Naive thymus-derived CD4-positive, alpha-beta T cell (primary cell): ENCODE measurements at regions of chr12 and their contacts with region 1.

Region 1: DNA sequence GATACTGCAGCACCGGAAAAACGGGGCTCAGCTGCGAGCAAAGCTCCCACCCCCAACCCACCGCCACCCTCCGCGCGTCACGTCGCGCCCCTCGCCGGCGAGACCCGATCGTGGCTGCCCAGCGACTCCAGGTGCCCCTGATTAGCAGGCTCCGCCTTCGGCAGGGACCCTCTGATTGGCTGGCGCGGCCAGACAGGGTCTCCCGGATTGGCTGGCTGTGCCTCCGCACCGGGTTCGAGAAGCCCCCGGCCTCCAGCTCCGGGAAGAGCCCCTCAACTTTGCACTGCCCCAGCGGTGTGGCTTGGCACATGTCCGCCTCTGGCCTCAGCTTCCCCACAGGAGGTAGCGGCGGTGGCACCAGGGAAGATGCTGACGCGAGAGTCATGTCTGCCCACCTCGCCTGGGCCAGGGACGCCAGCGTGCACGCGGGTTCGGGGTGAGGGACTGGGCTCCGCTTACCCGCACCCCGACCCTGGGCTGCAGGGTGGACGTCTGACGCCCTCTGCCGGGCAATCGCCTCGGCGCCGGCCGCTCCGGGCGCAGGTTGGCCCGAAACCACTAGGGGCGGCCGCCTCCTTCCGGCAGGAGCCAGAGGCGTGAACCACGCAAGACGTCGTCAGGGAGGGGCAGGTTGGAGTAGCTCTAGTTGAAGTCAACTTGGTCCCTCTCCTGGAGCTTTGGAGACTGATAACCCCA is 498 bp upstream of the RHOF start:
- DNase-seq: peak; percentile 91 to 98 (median 95)
- ATAC-seq: peak; percentile 77
- H3K4me3 ChIP-seq: peak overlapping the region; percentile 99
- H3K4me3 Mint-ChIP-seq: peak overlapping the region; percentile 84 to 99 (median 93)
- H3K27ac ChIP-seq: peak overlapping the region; percentile 96
- H3K27ac Mint-ChIP-seq: peak overlapping the region; percentile 85 to 99 (median 95)
- H3K4me1 ChIP-seq: peaks cover 44 to 50% of the 10 kb centered on the region in 2 donors
- H3K4me1 Mint-ChIP-seq: peaks cover 44 to 72% (median 59%) of the 10 kb centered on the region in 7 donors
- H3K27me3 ChIP-seq: no peaks in the 10 kb centered on the region
- H3K27me3 Mint-ChIP-seq: no peaks in the 10 kb centered on the region

Region 2: DNA sequence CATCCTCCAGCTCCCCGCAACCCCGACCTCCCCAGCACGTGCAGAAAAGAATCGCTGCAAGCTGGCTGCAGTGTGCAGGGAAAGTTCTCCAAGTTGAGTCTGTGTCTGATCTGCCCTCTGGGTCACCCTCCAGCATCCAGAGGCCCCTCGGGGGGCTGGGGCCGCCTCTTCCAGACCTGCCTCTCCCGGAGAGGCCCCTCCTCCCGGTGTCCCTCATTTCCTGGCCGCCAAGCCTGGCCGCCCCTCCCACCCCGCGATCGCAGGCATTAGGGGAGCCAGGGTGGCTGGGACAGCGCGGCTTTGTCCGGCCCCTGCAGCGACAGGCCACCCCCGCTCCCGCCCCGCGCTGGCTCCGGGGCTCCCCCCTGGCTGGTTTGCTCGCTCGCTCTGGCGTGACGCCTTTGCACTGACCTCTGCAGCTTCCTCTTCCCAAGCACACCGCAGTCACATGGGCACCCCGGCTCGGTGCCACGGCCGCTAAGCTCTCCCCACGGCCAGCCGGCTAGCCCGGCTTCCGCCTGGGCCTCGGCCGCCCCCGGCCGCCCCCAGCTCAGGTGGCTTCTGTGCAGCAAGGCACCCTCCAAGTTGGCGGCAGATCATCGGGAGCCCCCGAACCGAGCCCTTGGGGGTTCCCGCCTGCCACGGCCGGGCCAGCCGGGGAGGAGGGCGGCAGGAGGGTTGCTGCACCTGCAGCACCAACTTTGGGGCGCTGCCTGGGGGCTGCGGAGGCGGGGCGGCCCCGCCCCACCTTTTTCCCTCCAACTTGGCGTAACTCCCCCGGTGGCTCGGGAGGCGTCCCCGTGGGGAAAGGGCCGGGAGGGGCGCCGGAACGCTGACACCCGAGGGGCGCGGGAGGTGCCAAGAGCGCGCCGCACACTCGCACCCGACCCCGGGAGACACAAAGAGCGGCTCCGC is 256.8 kb before region 1 on chr12:
- CTCF ChIA-PET with region 1: no interaction called
- POLR2A ChIA-PET with region 1: interaction called, 4 read pairs
- intact Hi-C with region 1: loop called in 1 of 2 experiments (anchors 5 kb)
- DNase-seq: peak in 8 of 9 donors; percentile 20 to 70 (median 28)
- ATAC-seq: peak; percentile 51
- H3K4me3 ChIP-seq: peak overlapping the region; percentile 62
- H3K4me3 Mint-ChIP-seq: peak overlapping the region; percentile 51 to 91 (median 81)
- H3K27ac ChIP-seq: peak overlapping the region; percentile 74
- H3K27ac Mint-ChIP-seq: peak overlapping the region; percentile 43 to 97 (median 92)
- H3K4me1 ChIP-seq: peaks cover 29 to 36% of the 10 kb centered on the region in 2 donors
- H3K4me1 Mint-ChIP-seq: peaks cover 21 to 56% (median 44%) of the 10 kb centered on the region in 7 donors
- H3K27me3 ChIP-seq: no peaks in the 10 kb centered on the region
- H3K27me3 Mint-ChIP-seq: peaks cover 0 to 4% (median 0%) of the 10 kb centered on the region in 5 donors

Region 3: DNA sequence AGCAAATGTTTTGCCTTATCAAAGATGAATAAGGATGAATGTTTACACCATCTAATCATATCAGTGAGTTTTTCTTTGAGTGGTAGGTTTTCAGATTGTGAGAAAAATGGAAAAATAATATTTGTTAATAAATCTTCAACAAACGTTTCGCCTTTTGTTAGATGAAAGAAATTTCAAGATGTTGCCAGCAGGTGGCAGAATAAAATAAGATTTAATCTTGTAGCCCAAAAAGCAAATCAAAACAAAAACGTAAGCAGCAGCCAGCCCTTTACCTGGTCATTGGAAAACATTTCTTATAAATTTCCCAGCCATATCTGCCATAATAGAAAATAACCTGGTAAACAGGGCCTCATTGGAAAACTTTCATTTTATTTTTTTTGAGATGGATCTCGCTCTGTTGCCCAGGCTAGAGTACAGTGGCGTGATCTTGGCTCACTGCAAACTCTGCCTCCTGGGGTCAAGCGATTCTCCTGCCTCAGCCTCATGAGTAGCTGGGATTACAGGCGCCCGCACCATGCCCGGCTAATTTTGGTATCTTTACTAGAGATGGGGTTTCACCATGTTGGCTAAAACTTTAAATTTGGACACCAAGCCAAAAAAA is 96.8 kb before region 1 on chr12:
- CTCF ChIA-PET with region 1: interaction called, 57 read pairs
- POLR2A ChIA-PET with region 1: interaction called, 5 read pairs
- intact Hi-C with region 1: loop called (anchors 1 kb)
- DNase-seq: peak in 7 of 9 donors; percentile 37 to 72 (median 63)
- ATAC-seq: no peak
- H3K4me3 ChIP-seq: no peak overlapping the region
- H3K4me3 Mint-ChIP-seq: no peak overlapping the region
- H3K27ac ChIP-seq: no peak overlapping the region
- H3K27ac Mint-ChIP-seq: peak overlapping the region in 4 of 9 donors; percentile 5 to 41 (median 28)
- H3K4me1 ChIP-seq: no peaks in the 10 kb centered on the region
- H3K4me1 Mint-ChIP-seq: peaks cover 0 to 5% (median 0%) of the 10 kb centered on the region in 7 donors
- H3K27me3 ChIP-seq: no peaks in the 10 kb centered on the region
- H3K27me3 Mint-ChIP-seq: peaks cover 0 to 7% (median 0%) of the 10 kb centered on the region in 5 donors

Region 4: GRCh38 chr12:121773011-121773777 is 20.8 kb before region 1 on chr12:
- CTCF ChIA-PET with region 1: interaction called, 325 read pairs
- POLR2A ChIA-PET with region 1: interaction called, 1,941 read pairs
- intact Hi-C with region 1: loop called (anchors 1 kb)
- DNase-seq: peak; percentile 64 to 79 (median 75)
- ATAC-seq: peak; percentile 91
- H3K4me3 ChIP-seq: no peak overlapping the region
- H3K4me3 Mint-ChIP-seq: no peak overlapping the region
- H3K27ac ChIP-seq: no peak overlapping the region
- H3K27ac Mint-ChIP-seq: peak overlapping the region in 8 of 9 donors; percentile 15 to 88 (median 59)
- H3K4me1 ChIP-seq: peaks cover 14 to 16% of the 10 kb centered on the region in 2 donors
- H3K4me1 Mint-ChIP-seq: peaks cover 3 to 15% (median 10%) of the 10 kb centered on the region in 7 donors
- H3K27me3 ChIP-seq: no peaks in the 10 kb centered on the region
- H3K27me3 Mint-ChIP-seq: no peaks in the 10 kb centered on the region

Region 5: DNA sequence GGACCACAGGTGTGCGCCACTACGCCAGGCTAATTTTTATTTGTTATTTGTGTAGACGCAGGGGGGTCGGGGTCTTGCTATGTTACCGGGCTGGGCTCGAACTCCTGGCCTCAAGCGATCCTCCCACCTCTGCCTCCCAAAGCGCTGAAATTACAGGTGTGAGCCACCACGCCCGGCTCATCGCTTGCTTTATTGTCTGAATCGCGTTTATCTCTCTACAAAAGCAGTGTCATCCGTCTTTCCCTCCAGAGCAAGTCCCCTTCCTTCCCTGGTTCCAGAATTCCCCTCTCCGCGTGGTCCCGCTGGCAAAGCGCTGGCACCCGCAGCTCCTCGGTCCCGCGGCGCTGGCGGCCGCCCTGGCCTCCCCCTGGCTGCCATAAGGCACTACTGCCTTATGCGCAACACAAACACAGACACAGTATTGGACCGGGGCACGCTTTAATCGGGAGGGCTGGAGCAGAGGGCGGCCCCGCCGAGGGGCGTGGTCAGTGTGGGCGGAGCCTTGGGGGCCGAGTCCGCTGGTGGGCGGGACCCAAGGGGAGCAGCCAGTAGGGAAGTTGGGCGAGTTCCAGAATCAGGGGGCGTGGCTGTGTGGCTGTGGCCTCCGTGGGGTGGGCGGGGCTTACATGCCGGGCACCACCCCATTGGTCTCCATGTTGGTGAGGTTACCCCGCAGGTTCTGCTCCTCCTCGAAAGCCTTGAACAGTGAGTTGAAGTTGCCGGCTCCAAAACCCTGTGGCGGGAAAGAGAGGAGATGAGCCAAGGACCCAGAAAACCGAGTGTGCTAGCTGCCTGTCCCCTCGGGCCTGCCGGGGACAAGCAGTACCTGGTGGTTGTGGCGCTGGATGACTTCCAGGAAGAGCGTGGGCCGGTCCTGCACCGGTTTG is 45.4 kb after region 1 on chr12:
- CTCF ChIA-PET with region 1: interaction called, 8 read pairs
- POLR2A ChIA-PET with region 1: interaction called, 32 read pairs
- intact Hi-C with region 1: loop called (anchors 1 kb)
- DNase-seq: peak; percentile 98 to 100 (median 99)
- ATAC-seq: peak; percentile 100
- H3K4me3 ChIP-seq: peak overlapping the region; percentile 91
- H3K4me3 Mint-ChIP-seq: peak overlapping the region; percentile 96 to 100 (median 98)
- H3K27ac ChIP-seq: peak overlapping the region; percentile 58
- H3K27ac Mint-ChIP-seq: peak overlapping the region; percentile 87 to 96 (median 92)
- H3K4me1 ChIP-seq: peaks cover 8 to 13% of the 10 kb centered on the region in 2 donors
- H3K4me1 Mint-ChIP-seq: peaks cover 12 to 27% (median 18%) of the 10 kb centered on the region in 7 donors
- H3K27me3 ChIP-seq: no peaks in the 10 kb centered on the region
- H3K27me3 Mint-ChIP-seq: no peaks in the 10 kb centered on the region

Region 6: DNA sequence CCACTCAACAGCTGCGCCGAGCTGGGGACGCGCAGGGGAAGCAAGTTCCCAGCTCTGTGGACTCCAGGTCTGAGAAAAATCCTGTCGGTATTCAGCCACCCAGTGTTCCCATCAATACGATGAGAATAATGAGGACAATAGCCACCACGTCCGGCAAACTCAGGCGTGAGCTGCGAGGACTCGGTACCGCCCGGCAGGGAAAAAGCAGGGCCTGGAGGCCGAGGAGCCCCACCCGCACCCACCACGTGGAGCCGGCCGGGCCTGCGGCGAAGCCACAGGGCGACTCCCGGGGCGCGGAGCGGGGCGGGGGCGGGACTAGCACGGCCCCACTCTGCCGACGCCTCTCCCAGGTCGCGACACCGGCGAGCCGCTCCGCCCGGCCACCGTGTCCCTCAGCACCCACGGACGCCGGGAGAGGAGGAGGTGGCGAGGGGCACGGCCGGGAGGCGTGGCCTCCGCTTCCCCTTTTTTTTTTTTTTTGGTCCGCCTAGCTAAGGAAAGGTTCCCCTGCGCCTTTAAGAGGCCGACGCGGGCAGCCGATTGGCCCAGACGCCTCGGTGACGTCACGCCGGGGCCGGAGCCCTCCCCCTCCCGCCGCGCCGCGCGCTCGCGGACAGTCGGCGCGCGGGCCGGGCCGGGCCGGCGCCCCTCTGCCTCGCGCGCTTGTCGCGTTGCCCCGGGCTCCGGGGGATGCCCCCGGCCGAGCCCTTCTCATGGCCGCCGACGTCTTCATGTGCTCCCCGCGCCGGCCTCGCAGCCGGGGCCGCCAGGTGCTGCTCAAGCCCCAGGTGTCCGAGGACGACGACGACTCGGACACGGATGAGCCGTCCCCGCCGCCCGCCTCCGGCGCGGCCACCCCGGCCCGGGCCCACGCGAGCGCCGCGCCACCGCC is 284.4 kb after region 1 on chr12 and contains the start of gene MLXIP:
- CTCF ChIA-PET with region 1: no interaction called
- POLR2A ChIA-PET with region 1: no interaction called
- intact Hi-C with region 1: loop called in 1 of 2 experiments (anchors 5 kb)
- DNase-seq: peak; percentile 77 to 95 (median 85)
- ATAC-seq: peak; percentile 91
- H3K4me3 ChIP-seq: peak within 1 kb of the TSS; percentile 66
- H3K4me3 Mint-ChIP-seq: peak within 1 kb of the TSS; percentile 85 to 100 (median 98)
- H3K27ac ChIP-seq: peak within 1 kb of the TSS; percentile 82
- H3K27ac Mint-ChIP-seq: peak within 1 kb of the TSS; percentile 82 to 99 (median 88)
- H3K4me1 ChIP-seq: peaks cover 22 to 32% of the 10 kb centered on the region in 2 donors
- H3K4me1 Mint-ChIP-seq: peaks cover 7 to 45% (median 28%) of the 10 kb centered on the region in 7 donors
- H3K27me3 ChIP-seq: no peaks in the 10 kb centered on the region
- H3K27me3 Mint-ChIP-seq: no peaks in the 10 kb centered on the region
- total RNA-seq, gene MLXIP: 57.0 to 123 (median 115) TPM